OCI-LY7 (cell line): ENCODE measurements at regions of chr16 and their contacts with region 1.

Region 1: DNA sequence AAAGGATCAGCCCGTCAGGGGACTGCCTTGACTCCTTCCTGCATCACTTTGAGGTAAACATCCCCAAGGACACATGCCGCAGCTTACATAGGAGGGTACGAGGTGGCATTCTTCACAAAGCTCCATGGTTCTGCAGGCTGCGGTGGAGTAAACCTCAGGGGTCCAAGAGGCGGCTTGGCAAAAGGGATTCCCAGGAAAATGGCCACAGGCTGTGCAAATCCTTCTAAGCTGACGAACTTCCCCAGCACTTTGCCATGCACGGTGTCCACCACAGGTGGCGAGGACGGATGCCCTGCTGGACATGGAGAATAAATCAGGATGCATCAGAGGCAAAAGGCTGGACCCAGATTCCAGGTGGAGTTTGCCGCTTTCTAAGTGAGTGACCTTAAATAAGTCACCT is 4.2 kb downstream of the CES1 start:
- DNase-seq: no peak
- H3K4me3 ChIP-seq: no peak overlapping the region
- H3K27ac ChIP-seq: no peak overlapping the region
- H3K4me1 ChIP-seq: no peaks in the 10 kb centered on the region
- CTCF ChIP-seq: no peak

Region 2: GRCh38 chr16:55765161-55765560 is 63.5 kb before region 1 on chr16:
- CTCF ChIA-PET with region 1: no interaction called
- POLR2A ChIA-PET with region 1: no interaction called
- intact Hi-C with region 1: loop called (anchors 2 kb)
- DNase-seq: no peak
- H3K4me3 ChIP-seq: no peak overlapping the region
- H3K27ac ChIP-seq: no peak overlapping the region
- H3K4me1 ChIP-seq: no peaks in the 10 kb centered on the region
- CTCF ChIP-seq: no peak